CD4-positive, alpha-beta memory T cell (primary cell): ENCODE measurements at regions of chr6 and their contacts with region 1.

Region 1: DNA sequence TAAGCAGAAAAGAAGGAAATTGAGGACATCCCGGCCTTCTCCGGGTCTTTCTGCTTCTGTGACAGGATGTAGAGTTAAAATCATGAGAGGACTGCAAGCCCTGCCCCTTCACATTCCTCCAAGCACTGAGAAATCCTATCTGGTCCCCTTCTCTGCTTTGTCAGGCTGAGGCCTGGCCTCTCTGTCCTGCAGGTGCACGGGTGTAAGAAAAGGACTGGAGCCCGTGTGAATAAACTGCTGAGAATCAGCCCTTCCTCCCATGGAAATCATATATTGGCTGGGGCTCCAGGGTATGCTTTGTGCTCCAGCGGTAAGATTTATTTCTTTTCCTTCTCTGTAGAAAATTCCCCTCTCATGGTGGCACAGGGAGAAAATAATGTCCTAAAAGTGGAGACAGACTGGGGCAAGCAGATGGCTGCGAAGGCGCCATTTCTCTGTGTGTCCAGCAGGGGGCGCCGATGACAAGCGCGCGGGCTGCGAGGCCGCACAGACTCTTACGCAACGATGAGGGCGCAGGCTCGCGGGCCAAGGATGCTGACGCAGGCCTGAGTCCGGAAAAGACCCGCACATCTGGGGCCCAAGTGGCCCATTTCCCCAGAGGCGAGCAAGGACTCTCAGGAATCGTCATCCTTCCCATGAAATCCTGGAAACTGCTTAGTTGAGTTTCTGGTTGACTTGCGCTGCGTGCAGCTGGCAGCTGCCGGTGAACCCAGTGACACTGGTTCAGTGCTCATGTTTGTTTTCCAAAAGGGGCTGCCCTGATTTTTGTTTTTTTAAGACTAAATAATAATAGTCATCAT is 258.6 kb downstream of the ADGB start:
- DNase-seq: peak; percentile 51 to 72 (median 64)
- H3K4me3 ChIP-seq: peak overlapping the region in 1 of 2 donors; percentile 46
- H3K4me3 Mint-ChIP-seq: peak overlapping the region in 6 of 8 donors; percentile 7 to 68 (median 42)
- H3K27ac ChIP-seq: no peak overlapping the region
- H3K27ac Mint-ChIP-seq: peak overlapping the region in 2 of 7 donors; percentile 21 to 58
- H3K4me1 ChIP-seq: peaks cover 5% of the 10 kb centered on the region
- H3K4me1 Mint-ChIP-seq: peaks cover 0 to 3% (median under 1%) of the 10 kb centered on the region in 4 donors
- H3K27me3 ChIP-seq: no peaks in the 10 kb centered on the region
- H3K27me3 Mint-ChIP-seq: peaks cover 2% of the 10 kb centered on the region in 2 donors

Region 2: DNA sequence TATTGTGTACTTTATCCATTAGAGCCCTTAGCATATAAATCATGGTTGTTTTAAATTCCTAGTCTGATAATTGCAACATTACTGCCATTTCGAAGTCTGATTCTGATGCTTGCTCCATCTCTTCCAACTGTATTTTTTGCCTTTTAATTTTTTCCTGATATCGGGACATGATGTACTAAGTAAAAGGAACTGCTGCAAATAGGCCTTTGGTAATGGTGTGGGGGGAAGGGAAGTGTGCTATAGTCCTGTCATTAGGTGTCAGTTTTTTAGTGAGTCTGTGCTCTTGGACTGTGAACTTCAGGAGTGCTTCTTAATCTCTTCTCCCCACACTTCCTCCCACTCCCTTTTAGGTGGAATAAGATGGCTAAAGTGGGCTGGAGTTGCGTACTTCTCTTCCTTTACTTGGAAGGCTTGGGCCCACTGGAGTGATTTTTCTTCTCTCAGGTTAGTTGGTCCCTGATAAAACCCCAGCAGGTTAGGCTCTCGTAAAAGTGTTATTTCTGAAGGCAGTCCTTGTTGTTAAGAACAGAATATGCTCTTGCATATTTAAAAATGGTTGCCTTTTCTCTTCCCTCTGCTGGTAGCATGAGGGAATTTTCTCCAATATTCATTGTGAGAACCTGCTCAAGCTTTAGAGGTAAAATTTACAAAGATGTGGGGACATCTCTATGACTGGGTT is 364.9 kb after region 1 on chr6:
- CTCF ChIA-PET with region 1: no interaction called
- POLR2A ChIA-PET with region 1: no interaction called
- intact Hi-C with region 1: loop called (anchors 1 kb)
- DNase-seq: peak in 4 of 5 donors; percentile 12 to 29 (median 16)
- H3K4me3 ChIP-seq: no peak overlapping the region
- H3K4me3 Mint-ChIP-seq: no peak overlapping the region
- H3K27ac ChIP-seq: no peak overlapping the region
- H3K27ac Mint-ChIP-seq: peak overlapping the region in 2 of 7 donors; percentile 12 to 82
- H3K4me1 ChIP-seq: peaks cover 12% of the 10 kb centered on the region
- H3K4me1 Mint-ChIP-seq: peaks cover 30 to 52% (median 42%) of the 10 kb centered on the region in 4 donors
- H3K27me3 ChIP-seq: no peaks in the 10 kb centered on the region
- H3K27me3 Mint-ChIP-seq: no peaks in the 10 kb centered on the region

Region 3: GRCh38 chr6:147285087-147285855 is 427.9 kb after region 1 on chr6:
- CTCF ChIA-PET with region 1: interaction called, 21 read pairs
- POLR2A ChIA-PET with region 1: no interaction called
- intact Hi-C with region 1: loop called (anchors 1 kb)
- DNase-seq: peak in 4 of 5 donors; percentile 14 to 29 (median 24)
- H3K4me3 ChIP-seq: no peak overlapping the region
- H3K4me3 Mint-ChIP-seq: peak overlapping the region in 3 of 8 donors; percentile 6 to 27 (median 7)
- H3K27ac ChIP-seq: no peak overlapping the region
- H3K27ac Mint-ChIP-seq: peak overlapping the region in 2 of 7 donors; percentile 61 to 64
- H3K4me1 ChIP-seq: peaks cover 8% of the 10 kb centered on the region
- H3K4me1 Mint-ChIP-seq: peaks cover 12 to 28% (median 15%) of the 10 kb centered on the region in 4 donors
- H3K27me3 ChIP-seq: no peaks in the 10 kb centered on the region
- H3K27me3 Mint-ChIP-seq: no peaks in the 10 kb centered on the region

Region 4: GRCh38 chr6:147382945-147383554 is 525.7 kb after region 1 on chr6:
- CTCF ChIA-PET with region 1: no interaction called
- POLR2A ChIA-PET with region 1: no interaction called
- intact Hi-C with region 1: loop called (anchors 5 kb)
- DNase-seq: no peak
- H3K4me3 ChIP-seq: no peak overlapping the region
- H3K4me3 Mint-ChIP-seq: no peak overlapping the region
- H3K27ac ChIP-seq: no peak overlapping the region
- H3K27ac Mint-ChIP-seq: no peak overlapping the region
- H3K4me1 ChIP-seq: no peaks in the 10 kb centered on the region
- H3K4me1 Mint-ChIP-seq: no peaks in the 10 kb centered on the region
- H3K27me3 ChIP-seq: no peaks in the 10 kb centered on the region
- H3K27me3 Mint-ChIP-seq: no peaks in the 10 kb centered on the region

Region 5: DNA sequence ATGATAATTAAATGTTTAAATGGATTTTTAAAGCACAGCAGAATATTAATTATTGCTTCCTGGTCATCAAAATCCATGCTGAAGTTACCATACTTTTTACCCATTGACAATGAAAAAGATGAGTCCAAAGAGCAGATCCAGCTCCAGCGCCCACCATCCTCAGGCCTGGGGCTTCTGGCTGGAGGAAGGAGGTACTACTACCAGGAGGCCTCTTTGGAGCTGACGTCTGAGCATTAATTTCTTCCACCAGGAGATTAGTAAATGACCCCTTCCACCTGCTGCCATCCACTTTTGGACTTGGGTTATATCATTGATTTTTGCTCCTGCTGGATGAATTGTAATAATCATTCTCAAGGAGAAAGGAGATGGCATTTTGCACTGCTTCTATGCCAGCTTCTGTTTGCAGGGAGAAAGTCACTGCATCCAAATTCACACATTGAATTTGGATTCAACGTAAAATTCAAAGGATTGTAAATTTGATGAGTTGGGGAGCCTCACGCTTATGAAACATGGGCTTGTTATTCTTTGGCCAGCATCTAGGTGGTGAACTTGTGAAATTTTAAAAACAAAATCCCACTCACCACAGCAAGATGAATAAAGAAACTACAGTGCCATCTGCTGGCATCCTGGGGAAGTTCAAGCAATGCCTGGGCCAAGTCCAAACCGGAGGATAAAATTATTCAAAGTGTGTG is 1607.1 kb after region 1 on chr6:
- CTCF ChIA-PET with region 1: interaction called, 3 read pairs
- POLR2A ChIA-PET with region 1: no interaction called
- intact Hi-C with region 1: loop called (anchors 1 kb)
- DNase-seq: peak in 4 of 5 donors; percentile 39 to 48 (median 43)
- H3K4me3 ChIP-seq: no peak overlapping the region
- H3K4me3 Mint-ChIP-seq: no peak overlapping the region
- H3K27ac ChIP-seq: no peak overlapping the region
- H3K27ac Mint-ChIP-seq: no peak overlapping the region
- H3K4me1 ChIP-seq: no peaks in the 10 kb centered on the region
- H3K4me1 Mint-ChIP-seq: peaks cover 1 to 11% (median 5%) of the 10 kb centered on the region in 4 donors
- H3K27me3 ChIP-seq: no peaks in the 10 kb centered on the region
- H3K27me3 Mint-ChIP-seq: peaks cover 7 to 17% of the 10 kb centered on the region in 2 donors